GM10248 (cell line): ENCODE measurements at regions of chr3 and their contacts with region 1.

Region 1: GRCh38 chr3:158420654-158421396 is 150.2 kb upstream of the MLF1 start:
- DNase-seq: peak; percentile 4
- CTCF ChIP-seq: no peak

Region 2: DNA sequence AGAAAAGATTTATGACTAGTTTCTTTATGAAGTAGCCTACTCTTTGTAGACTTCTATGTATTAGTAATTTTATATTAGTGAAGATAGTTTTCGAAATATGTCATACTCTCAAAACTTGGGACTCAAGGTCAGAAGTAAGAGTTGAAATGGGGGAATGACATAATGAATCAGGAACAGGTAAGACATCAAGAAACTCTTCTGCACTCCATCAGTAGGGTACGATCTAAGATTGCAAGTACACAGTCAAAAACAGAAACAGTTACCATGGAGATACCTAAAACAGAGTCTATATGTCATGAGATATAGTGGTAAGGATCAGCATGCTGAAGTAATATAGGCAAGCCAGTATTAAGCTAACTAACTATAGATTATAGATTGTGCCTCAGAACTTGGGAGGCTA is 36.8 kb before region 1 on chr3:
- CTCF ChIA-PET with region 1: no interaction called
- POLR2A ChIA-PET with region 1: no interaction called
- DNase-seq: peak; percentile 35
- CTCF ChIP-seq: no peak

Region 3: DNA sequence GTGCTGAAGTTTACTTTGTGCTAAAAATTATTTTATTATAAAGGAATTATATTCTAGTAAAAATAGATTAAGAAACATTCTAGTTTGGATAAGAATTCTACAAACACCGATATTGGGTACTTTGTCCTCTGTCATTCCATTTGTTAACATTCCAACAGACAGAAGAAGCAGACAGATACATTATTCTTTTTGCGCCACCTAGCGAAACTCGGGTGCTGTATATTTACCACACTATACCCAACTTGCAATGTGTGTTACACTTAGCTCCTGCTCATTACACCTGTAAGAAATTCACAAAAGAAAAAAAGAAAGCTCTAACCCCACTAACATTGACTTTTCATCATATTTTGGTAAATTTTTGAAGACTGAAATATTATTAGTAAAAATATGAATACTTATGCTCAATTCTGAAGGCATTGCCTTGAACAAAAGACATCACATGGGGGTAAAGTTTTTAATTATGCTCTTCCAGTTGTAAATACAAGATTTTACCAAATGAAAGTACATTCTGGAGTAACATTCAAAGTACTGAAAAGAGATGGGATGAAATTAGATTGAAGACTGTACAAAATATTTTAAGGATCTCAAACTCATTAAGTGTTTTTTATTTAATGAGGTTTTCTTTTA is 13.7 kb after region 1 on chr3:
- CTCF ChIA-PET with region 1: interaction called, 13 read pairs
- POLR2A ChIA-PET with region 1: no interaction called
- DNase-seq: peak; percentile 9
- CTCF ChIP-seq: peak; percentile 72

Region 4: DNA sequence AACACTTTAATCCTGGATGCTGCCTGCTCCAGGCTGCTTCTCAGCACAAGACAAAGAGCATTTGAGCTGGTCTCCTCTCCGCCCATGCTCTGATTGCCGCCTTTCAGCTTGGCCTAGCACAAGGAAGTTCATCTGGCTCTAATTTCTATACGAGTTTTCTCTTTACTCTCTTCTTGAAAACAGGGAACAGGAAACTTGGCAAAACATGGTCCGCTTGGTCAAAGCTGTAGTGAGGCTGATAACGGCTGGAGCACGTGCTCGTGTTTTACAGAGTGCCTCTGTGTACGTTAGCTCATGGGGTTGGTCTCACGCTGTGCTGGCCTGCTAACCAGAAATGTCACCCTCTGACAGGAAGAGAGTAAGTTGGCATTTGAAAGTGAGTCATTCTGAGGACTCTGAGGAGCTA is 292.3 kb after region 1 on chr3:
- CTCF ChIA-PET with region 1: no interaction called
- POLR2A ChIA-PET with region 1: no interaction called
- DNase-seq: no peak
- CTCF ChIP-seq: no peak